ENCODE measurements at regions of chr1 and their contacts with region 1.

Region 1: DNA sequence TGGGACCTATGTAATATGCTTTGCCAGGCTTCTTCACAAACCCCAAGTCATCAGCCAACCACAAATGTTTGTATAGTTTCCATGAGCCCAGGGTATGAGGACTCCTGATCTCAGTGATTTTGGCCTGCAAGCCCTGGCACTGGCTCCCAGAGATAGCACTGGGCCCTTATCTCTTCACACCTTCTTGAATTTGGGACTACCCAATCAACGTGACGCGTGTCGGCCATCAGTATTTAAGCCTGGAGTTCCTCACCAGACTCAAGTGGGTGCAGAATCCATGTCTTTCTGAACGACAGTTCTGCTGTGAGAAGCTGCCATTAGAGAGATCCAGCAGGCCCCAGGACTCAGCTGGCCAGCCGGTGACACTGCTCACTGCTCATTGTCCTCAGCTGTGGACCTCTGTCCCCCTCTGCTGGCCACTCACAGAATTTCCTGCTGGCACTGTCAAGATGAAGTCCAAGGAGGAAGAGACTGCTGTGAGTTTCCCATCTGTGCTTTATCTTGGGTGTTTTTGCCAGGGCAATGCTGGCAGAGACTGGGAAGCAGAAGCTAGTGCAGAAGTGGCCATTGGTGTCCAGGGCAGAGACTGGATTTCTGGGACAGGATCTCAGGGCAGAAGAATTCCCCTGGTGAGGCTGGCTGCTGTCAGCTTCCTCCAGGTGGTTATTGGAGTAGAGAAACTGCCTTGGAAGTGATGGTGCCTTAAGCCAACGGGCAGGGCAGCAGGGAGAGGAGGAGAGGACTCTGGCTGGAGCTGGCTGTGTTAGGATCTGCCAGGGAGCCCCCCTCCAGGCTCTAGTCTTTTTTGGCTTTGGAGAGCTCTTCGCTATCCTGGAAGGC is 28.4 kb downstream of the TMCC2 start:
- DNase-seq: peak; percentile 86
- H3K4me3 ChIP-seq: no peak overlapping the region
- H3K27ac ChIP-seq: no peak overlapping the region
- H3K4me1 ChIP-seq: peaks cover 5% of the 10 kb centered on the region
- H3K27me3 ChIP-seq: no peaks in the 10 kb centered on the region
- CTCF ChIP-seq: peak; percentile 94

Region 2: GRCh38 chr1:204806943-204807687 is 449.0 kb before region 1 on chr1:
- CTCF ChIA-PET with region 1: interaction called, 9 read pairs
- POLR2A ChIA-PET with region 1: no interaction called
- intact Hi-C with region 1: loop called (anchors 5 kb)
- DNase-seq: peak; percentile 86
- H3K4me3 ChIP-seq: peak overlapping the region; percentile 48
- H3K27ac ChIP-seq: no peak overlapping the region
- H3K4me1 ChIP-seq: no peaks in the 10 kb centered on the region
- H3K27me3 ChIP-seq: peaks cover 12% of the 10 kb centered on the region
- CTCF ChIP-seq: peak; percentile 100; the same call in 1 of the 2 replicates

Region 3: GRCh38 chr1:204989266-204990058 is 266.7 kb before region 1 on chr1:
- CTCF ChIA-PET with region 1: interaction called, 5 read pairs
- POLR2A ChIA-PET with region 1: no interaction called
- intact Hi-C with region 1: loop called (anchors 1 kb)
- DNase-seq: peak; percentile 74
- H3K4me3 ChIP-seq: no peak overlapping the region
- H3K27ac ChIP-seq: no peak overlapping the region
- H3K4me1 ChIP-seq: no peaks in the 10 kb centered on the region
- H3K27me3 ChIP-seq: no peaks in the 10 kb centered on the region
- CTCF ChIP-seq: peak; percentile 97

Region 4: DNA sequence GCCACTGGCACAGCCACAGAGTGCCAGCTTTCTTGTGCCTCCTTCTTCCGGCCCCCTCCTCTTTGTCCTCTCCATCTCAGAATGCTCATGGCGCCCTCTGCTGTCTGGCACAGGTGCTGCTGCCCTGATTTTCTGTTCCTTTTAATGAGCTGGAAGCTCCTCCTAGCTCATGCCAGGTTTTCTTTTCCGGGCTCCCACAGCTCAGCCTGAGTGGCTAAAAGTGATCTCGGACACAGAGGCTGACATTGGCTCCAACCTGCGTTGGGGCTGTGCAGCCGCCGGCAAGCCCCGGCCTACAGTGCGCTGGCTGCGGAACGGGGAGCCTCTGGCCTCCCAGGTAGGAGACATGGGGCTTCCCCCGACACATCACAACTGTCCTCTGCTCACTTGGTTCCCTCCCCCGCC is 194.5 kb before region 1 on chr1:
- CTCF ChIA-PET with region 1: interaction called, 5 read pairs
- POLR2A ChIA-PET with region 1: no interaction called
- intact Hi-C with region 1: loop called (anchors 5 kb)
- DNase-seq: peak; percentile 87
- H3K4me3 ChIP-seq: no peak overlapping the region
- H3K27ac ChIP-seq: no peak overlapping the region
- H3K4me1 ChIP-seq: no peaks in the 10 kb centered on the region
- H3K27me3 ChIP-seq: no peaks in the 10 kb centered on the region
- CTCF ChIP-seq: peak; percentile 96

Region 5: DNA sequence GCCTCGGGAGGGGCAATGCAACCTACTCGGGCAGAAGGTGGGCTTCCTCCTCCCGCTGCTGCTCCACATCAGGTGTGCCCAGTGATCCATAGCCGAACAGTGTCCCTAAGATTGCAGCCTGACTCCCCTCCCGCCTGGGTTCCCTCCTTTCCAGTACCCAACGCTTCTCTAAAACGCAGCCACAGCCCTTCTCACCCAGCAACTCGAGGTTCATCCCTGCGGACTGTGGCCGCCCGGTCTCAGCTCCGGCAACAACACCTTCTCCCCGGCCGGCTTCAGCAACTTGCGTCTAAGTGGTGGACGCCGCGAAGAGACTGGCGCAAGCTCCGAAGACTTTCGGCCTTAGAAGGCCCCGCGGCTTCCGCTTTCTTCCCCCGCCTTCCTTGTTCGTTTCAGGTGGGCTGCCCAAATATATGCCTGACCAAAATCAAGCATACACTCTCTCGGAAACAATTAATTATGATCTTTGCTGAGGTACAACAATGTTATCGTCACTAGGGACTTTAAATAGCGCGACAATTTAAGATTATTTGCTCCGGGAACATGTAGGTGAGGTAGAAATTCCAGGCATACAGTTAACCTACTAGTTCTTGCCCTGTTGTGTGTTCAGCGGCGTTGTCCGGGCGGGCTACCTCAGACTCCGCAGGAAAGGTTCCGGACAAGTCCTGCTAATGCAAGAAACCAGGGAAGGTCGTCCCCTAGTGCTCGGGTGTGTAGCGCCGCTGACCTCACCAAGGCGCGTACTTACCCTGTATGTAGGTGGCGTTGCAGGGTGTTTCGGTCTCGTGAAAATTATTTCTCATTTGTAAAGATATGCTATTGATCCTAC is 134.3 kb before region 1 on chr1 and contains the start of gene RBBP5:
- CTCF ChIA-PET with region 1: no interaction called
- POLR2A ChIA-PET with region 1: no interaction called
- intact Hi-C with region 1: loop called (anchors 5 kb)
- DNase-seq: peak; percentile 97
- H3K4me3 ChIP-seq: peak within 1 kb of the TSS; percentile 87
- H3K27ac ChIP-seq: peak within 1 kb of the TSS; percentile 99
- H3K4me1 ChIP-seq: peaks cover 18% of the 10 kb centered on the region
- H3K27me3 ChIP-seq: no peaks in the 10 kb centered on the region
- CTCF ChIP-seq: peak; percentile 75
- total RNA-seq, gene RBBP5: 24.4 and 32.0 TPM in 2 replicates

Region 6: GRCh38 chr1:205273551-205273982 is 17.4 kb after region 1 on chr1:
- CTCF ChIA-PET with region 1: interaction called, 10 read pairs
- POLR2A ChIA-PET with region 1: no interaction called
- intact Hi-C with region 1: no loop called
- DNase-seq: peak; percentile 77
- H3K4me3 ChIP-seq: no peak overlapping the region
- H3K27ac ChIP-seq: no peak overlapping the region
- H3K4me1 ChIP-seq: no peaks in the 10 kb centered on the region
- H3K27me3 ChIP-seq: no peaks in the 10 kb centered on the region
- CTCF ChIP-seq: peak; percentile 96

Region 7: DNA sequence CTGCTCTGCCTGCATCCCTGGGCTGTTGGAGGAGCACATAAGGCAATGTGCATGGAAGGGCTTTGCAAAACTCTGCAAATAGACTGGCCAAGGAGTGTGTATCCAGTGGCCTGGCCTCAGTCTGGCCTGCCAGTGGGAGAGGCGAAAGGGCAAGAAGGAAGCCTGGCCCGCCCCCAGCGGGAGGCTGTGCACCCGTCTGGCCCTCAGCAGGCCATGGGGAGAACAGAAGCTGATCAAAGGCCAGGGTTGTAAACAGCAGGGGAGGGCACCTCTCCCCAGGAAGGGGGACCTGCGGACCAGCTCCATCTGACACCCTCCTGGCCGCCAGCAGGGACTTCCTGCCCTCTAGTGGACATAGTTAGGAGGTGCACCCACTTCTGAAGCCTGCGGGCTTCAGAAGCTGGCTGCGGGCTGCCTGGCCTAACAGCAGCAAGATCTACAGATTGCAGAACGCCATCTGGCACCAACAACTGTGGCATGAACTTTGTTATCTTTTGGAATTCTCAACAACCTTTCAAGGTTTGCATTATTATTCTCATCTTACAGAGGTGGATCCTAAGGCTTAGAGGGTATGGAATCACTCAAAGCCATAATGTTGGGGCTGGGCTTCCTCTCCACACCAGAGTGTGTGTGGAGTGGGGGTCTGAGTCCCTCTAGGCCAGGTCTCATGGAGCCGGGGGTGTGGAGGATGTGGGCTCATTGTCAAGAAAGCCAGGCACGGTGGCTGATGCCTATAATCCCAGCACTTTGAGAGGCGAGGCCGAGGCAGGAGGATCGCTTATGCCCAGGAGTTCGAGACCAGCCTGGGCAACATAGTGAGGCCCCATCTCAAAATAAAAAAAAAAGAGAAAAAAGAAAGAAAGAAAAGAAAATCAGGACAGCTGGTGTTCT is 229.4 kb after region 1 on chr1:
- CTCF ChIA-PET with region 1: no interaction called
- POLR2A ChIA-PET with region 1: no interaction called
- intact Hi-C with region 1: no loop called
- DNase-seq: peak; percentile 84
- H3K4me3 ChIP-seq: no peak overlapping the region
- H3K27ac ChIP-seq: no peak overlapping the region
- H3K4me1 ChIP-seq: no peaks in the 10 kb centered on the region
- H3K27me3 ChIP-seq: no peaks in the 10 kb centered on the region
- CTCF ChIP-seq: peak; percentile 96

Measured in A673 (cell line).